ENCODE measurements at regions of chr5 and their contacts with region 1.

Region 1: GRCh38 chr5:1883120-1883924 is 597 bp upstream of the IRX4 start:
- DNase-seq: peak; percentile 58
- H3K4me3 Mint-ChIP-seq: peak overlapping the region; percentile 97
- H3K27ac Mint-ChIP-seq: peak overlapping the region; percentile 99
- H3K4me1 Mint-ChIP-seq: peaks cover 7% of the 10 kb centered on the region
- H3K27me3 Mint-ChIP-seq: no peaks in the 10 kb centered on the region
- CTCF ChIP-seq: no peak

Region 2: DNA sequence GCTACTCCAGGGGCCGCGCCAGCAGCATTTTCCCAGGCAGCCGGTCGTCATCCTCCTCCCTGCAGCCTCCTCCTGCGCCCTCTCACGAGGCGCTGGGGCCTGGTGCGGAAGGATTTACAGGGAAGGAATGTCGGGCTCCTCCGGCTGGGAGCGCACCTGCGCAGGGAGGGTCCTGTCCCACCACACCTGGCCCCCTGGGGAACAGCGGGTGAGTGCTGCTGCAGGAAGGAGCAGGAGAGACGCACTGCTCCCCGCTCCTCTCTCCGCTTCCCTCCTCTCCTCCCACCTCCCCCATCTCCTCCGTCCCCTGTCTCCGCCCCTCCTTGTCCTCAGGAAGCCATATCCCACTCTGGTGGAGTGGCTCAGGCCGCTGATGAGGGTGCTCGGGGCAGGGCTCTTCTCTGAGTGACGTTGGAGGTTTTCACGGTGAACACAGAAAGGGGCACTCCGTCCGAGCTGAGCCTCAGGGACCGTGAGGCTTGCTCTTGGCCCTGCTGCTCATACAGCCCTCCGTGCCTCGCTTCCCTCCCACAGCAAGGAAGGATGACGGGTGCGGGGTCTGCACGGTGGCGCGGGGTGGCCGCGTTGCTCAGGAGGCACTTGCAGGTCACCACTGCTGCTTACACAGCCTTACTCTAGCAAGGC is 31.9 kb before region 1 on chr5:
- CTCF ChIA-PET with region 1: no interaction called
- POLR2A ChIA-PET with region 1: no interaction called
- intact Hi-C with region 1: no loop called
- DNase-seq: no peak
- H3K4me3 Mint-ChIP-seq: no peak overlapping the region
- H3K27ac Mint-ChIP-seq: no peak overlapping the region
- H3K4me1 Mint-ChIP-seq: no peaks in the 10 kb centered on the region
- H3K27me3 Mint-ChIP-seq: peaks cover 47% of the 10 kb centered on the region
- CTCF ChIP-seq: no peak

Region 3: DNA sequence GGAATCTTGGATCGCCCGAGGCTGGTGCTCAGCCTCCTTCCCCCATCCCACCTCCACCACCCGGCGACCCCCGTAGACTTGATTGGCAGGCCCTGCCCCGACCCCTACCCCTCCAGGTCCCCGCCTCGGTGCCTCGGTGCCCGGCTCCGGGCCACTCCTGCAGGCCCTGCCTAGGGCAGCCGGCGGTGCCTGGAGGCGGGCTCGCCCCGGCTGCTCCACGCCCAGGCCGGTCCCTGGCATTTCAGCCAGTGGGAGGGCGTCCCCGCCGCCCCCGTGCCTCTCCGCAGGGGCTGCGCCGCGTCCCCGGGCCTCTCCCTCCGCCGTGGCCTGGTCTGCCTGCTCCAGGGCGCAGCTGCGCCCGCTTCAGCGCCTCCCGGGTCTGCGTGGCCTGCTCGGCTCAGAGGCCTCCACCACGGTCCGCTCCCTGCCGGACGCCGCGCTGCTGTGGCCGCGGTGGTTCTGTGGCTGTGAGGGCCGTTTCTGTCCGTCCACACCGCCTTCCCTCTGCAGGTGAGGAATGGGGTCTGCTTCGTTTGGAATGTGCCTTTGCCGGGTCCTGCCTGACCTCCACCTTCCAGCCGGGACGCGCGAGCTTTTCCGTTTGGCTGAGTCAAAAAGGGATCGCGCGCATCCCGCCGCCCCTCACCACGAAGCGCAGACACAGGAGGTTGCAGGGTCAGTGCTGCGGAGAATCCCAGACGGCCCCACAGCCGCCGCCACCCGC is 47.7 kb after region 1 on chr5:
- CTCF ChIA-PET with region 1: interaction called, 6 read pairs
- POLR2A ChIA-PET with region 1: interaction called, 69 read pairs
- intact Hi-C with region 1: loop called (anchors 2 kb)
- DNase-seq: peak; percentile 52
- H3K4me3 Mint-ChIP-seq: no peak overlapping the region
- H3K27ac Mint-ChIP-seq: no peak overlapping the region
- H3K4me1 Mint-ChIP-seq: peaks cover 8% of the 10 kb centered on the region
- H3K27me3 Mint-ChIP-seq: no peaks in the 10 kb centered on the region
- CTCF ChIP-seq: no peak

Region 4: GRCh38 chr5:1948663-1949652 is 65.6 kb after region 1 on chr5:
- CTCF ChIA-PET with region 1: no interaction called
- POLR2A ChIA-PET with region 1: interaction called, 144 read pairs
- intact Hi-C with region 1: loop called (anchors 2 kb)
- DNase-seq: peak; percentile 93
- H3K4me3 Mint-ChIP-seq: peak overlapping the region; percentile 67
- H3K27ac Mint-ChIP-seq: peak overlapping the region; percentile 96
- H3K4me1 Mint-ChIP-seq: peaks cover 28% of the 10 kb centered on the region
- H3K27me3 Mint-ChIP-seq: no peaks in the 10 kb centered on the region
- CTCF ChIP-seq: no peak

Region 5: DNA sequence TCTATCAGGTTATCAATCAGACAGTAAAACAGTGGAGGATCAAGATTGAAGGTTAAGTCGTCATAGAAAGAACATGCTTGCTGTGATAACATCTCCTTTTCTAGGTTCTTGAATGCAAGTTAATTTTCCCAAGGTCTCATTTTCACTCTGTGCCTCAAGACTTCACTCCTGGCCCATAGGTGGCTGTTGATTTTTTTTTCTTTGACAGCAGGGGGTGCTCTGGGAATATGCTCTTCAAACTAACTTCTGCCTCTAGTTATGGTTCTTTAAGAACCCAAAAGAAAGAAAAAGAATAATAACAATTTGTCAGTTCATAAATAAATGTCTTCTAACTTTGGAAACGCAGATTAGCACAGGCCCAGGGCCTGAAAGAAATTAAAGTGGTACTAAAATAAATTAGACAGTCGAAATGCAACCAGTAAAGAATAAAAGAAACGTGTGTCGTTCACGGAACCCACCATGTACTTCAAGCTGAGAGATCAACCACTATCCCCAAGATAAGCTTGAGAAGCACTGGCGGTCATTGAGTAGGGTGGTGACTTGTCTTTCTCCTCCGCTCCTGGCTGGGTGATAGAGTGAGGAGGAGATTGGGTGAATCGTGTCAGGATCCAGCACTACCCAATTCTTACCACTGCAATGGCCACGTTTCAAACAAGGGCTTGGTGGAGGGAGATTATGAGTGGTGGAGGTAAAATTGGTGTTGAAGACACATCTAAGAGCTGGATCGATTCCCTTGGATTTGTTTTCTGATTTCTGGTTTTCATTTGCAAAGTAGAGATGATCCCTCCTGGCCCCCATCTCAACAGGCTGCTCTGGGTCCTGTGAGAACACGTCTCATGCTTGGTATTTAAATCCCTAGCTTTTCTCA is 92.8 kb after region 1 on chr5:
- CTCF ChIA-PET with region 1: interaction called, 3 read pairs
- POLR2A ChIA-PET with region 1: interaction called, 136 read pairs
- intact Hi-C with region 1: loop called (anchors 2 kb)
- DNase-seq: peak; percentile 51
- H3K4me3 Mint-ChIP-seq: no peak overlapping the region
- H3K27ac Mint-ChIP-seq: no peak overlapping the region
- H3K4me1 Mint-ChIP-seq: peaks cover 33% of the 10 kb centered on the region
- H3K27me3 Mint-ChIP-seq: no peaks in the 10 kb centered on the region
- CTCF ChIP-seq: peak; percentile 11

Region 6: GRCh38 chr5:2038321-2039179 is 155.2 kb after region 1 on chr5:
- CTCF ChIA-PET with region 1: interaction called, 3 read pairs
- POLR2A ChIA-PET with region 1: interaction called, 3 read pairs
- intact Hi-C with region 1: loop called (anchors 2 kb)
- DNase-seq: peak; percentile 68
- H3K4me3 Mint-ChIP-seq: peak overlapping the region; percentile 71
- H3K27ac Mint-ChIP-seq: no peak overlapping the region
- H3K4me1 Mint-ChIP-seq: no peaks in the 10 kb centered on the region
- H3K27me3 Mint-ChIP-seq: peaks cover 27% of the 10 kb centered on the region
- CTCF ChIP-seq: peak; percentile 83

Region 7: GRCh38 chr5:2066373-2066772 is 183.1 kb after region 1 on chr5:
- CTCF ChIA-PET with region 1: no interaction called
- POLR2A ChIA-PET with region 1: no interaction called
- intact Hi-C with region 1: no loop called
- DNase-seq: no peak
- H3K4me3 Mint-ChIP-seq: no peak overlapping the region
- H3K27ac Mint-ChIP-seq: no peak overlapping the region
- H3K4me1 Mint-ChIP-seq: no peaks in the 10 kb centered on the region
- H3K27me3 Mint-ChIP-seq: peaks cover 34% of the 10 kb centered on the region
- CTCF ChIP-seq: no peak

Region 8: GRCh38 chr5:2136728-2137333 is 253.5 kb after region 1 on chr5:
- CTCF ChIA-PET with region 1: no interaction called
- POLR2A ChIA-PET with region 1: no interaction called
- intact Hi-C with region 1: no loop called
- DNase-seq: no peak
- H3K4me3 Mint-ChIP-seq: no peak overlapping the region
- H3K27ac Mint-ChIP-seq: no peak overlapping the region
- H3K4me1 Mint-ChIP-seq: peaks cover 18% of the 10 kb centered on the region
- H3K27me3 Mint-ChIP-seq: no peaks in the 10 kb centered on the region
- CTCF ChIP-seq: no peak

Region 9: DNA sequence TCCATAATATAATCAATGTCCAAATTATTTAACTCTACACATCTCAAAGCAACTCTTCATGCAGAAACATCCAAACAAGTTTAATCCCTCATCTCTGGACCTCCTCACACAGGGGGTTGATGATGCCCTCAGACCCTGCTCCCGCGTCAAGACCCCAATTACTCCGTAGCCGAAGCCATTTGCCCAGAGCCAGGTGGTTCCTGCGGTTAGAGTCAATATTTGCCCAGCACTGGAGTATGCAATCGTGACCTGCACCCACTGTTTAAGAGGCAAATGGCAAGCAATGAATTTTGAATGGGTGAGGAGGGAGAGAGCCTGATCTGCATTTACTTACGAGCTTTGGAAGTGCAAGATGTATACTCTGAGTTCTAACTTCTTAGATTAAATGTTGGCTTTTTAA is 271.4 kb after region 1 on chr5:
- CTCF ChIA-PET with region 1: no interaction called
- POLR2A ChIA-PET with region 1: no interaction called
- intact Hi-C with region 1: loop called (anchors 5 kb)
- DNase-seq: no peak
- H3K4me3 Mint-ChIP-seq: no peak overlapping the region
- H3K27ac Mint-ChIP-seq: no peak overlapping the region
- H3K4me1 Mint-ChIP-seq: peaks cover 21% of the 10 kb centered on the region
- H3K27me3 Mint-ChIP-seq: no peaks in the 10 kb centered on the region
- CTCF ChIP-seq: no peak

Region 10: GRCh38 chr5:2169850-2170760 is 286.8 kb after region 1 on chr5:
- CTCF ChIA-PET with region 1: no interaction called
- POLR2A ChIA-PET with region 1: no interaction called
- intact Hi-C with region 1: no loop called
- DNase-seq: no peak
- H3K4me3 Mint-ChIP-seq: no peak overlapping the region
- H3K27ac Mint-ChIP-seq: no peak overlapping the region
- H3K4me1 Mint-ChIP-seq: no peaks in the 10 kb centered on the region
- H3K27me3 Mint-ChIP-seq: peaks cover 28% of the 10 kb centered on the region
- CTCF ChIP-seq: no peak

Measured in MCF 10A (cell line).